H1 (cell line): ENCODE measurements at regions of chr2 and their contacts with region 1.

Region 1: DNA sequence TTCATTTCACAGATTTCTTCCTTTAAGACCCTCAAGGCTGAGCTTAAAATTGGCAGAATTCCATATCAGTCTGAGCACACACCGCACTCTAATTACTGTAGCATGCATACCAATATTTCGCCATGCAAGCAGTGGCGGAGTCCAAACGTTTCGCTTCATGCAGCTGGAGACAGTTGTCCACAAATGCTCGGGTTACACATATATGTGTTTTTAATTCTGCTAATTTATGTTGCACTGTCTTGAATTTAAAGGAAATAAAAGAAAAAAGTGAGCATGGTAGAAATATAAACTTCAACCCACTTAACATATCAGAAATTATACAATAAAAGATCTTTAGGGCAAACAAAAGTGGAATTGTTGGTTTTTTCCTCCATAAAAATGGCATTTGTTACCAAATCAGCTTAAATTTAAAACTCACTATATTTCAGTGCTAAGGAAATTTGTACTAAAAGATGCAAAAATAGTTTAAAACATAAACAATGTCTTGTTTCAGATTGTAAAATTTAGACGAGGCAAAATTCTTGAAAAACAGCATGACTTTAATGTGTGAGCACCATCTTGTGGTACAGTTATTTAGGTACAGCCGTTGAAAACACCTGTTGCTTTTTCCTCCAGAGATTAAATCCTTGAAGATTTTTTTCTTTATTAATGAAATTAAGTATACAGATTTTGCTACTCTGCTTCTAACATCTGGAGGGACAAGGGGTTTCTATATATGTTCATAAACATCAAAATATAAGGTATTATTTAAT is 24.1 kb upstream of the KANSL1L start:
- DNase-seq: no peak
- H3K4me3 ChIP-seq: no peak overlapping the region
- H3K27ac ChIP-seq: no peak overlapping the region
- H3K4me1 ChIP-seq: no peaks in the 10 kb centered on the region
- H3K27me3 ChIP-seq: peaks cover 0 to 1% (median 0%) of the 10 kb centered on the region in 4 experiments; a peak in 1 of 7 replicates
- CTCF ChIP-seq: peak in 2 of 3 experiments; percentile 46 to 48; a peak in 2 of 4 replicates
- EP300 ChIP-seq: no peak
- POLR2A ChIP-seq: no peak
- RAD21 ChIP-seq: peak; percentile 83 to 88

Region 2: GRCh38 chr2:209977386-209978239 is 217.7 kb before region 1 on chr2:
- CTCF ChIA-PET with region 1: interaction called, 16 read pairs
- POLR2A ChIA-PET with region 1: interaction called, 3 read pairs
- DNase-seq: no peak
- H3K4me3 ChIP-seq: no peak overlapping the region
- H3K27ac ChIP-seq: no peak overlapping the region
- H3K4me1 ChIP-seq: no peaks in the 10 kb centered on the region
- H3K27me3 ChIP-seq: no peaks in the 10 kb centered on the region
- CTCF ChIP-seq: peak in 2 of 3 experiments; percentile 21 to 29; a peak in 2 of 4 replicates
- EP300 ChIP-seq: no peak
- POLR2A ChIP-seq: no peak
- RAD21 ChIP-seq: peak in 1 of 2 experiments; percentile 68

Region 3: DNA sequence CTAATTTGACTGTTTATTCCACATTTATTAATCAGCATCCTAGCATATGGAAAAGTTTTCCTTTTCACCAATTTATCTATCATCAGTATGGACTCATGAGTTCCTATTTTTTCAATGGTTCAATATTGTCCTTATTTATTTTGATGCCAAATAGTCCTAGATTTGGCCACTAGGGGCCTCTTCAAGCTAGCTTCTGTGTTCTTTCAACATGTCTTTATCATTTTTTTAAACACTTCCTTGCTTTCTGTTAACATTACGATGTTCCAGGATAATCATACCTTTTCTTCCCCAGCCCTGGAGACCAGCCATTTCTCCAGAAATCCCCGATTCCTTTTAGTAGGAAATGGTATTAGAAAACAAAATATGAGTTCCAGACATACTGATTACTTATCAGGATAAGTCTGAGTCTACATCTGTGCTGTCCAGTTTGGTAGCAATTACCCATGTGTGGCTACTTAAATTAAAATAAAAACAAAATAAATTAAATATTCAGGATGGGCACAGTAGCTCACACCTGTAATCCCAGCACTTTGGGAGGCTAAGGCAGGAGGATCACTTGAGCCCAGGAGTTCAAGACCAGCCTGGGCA is 122.3 kb before region 1 on chr2:
- CTCF ChIA-PET with region 1: interaction called, 16 read pairs
- POLR2A ChIA-PET with region 1: no interaction called
- DNase-seq: no peak
- H3K4me3 ChIP-seq: no peak overlapping the region
- H3K27ac ChIP-seq: no peak overlapping the region
- H3K4me1 ChIP-seq: peaks cover 0 to 5% (median 2%) of the 10 kb centered on the region in 4 experiments; a peak in 4 of 7 replicates
- H3K27me3 ChIP-seq: no peaks in the 10 kb centered on the region
- CTCF ChIP-seq: peak in 2 of 3 experiments; percentile 32 to 60; a peak in 2 of 4 replicates
- EP300 ChIP-seq: no peak
- POLR2A ChIP-seq: no peak
- RAD21 ChIP-seq: peak; percentile 51 to 54

Region 4: GRCh38 chr2:210370562-210370961 is 175.3 kb after region 1 on chr2:
- CTCF ChIA-PET with region 1: no interaction called
- POLR2A ChIA-PET with region 1: no interaction called
- DNase-seq: no peak
- H3K4me3 ChIP-seq: no peak overlapping the region
- H3K27ac ChIP-seq: no peak overlapping the region
- H3K4me1 ChIP-seq: no peaks in the 10 kb centered on the region
- H3K27me3 ChIP-seq: no peaks in the 10 kb centered on the region
- CTCF ChIP-seq: no peak
- EP300 ChIP-seq: no peak
- POLR2A ChIP-seq: no peak
- RAD21 ChIP-seq: no peak